ENCODE measurements at regions of chr1 and their contacts with region 1.

Region 1: DNA sequence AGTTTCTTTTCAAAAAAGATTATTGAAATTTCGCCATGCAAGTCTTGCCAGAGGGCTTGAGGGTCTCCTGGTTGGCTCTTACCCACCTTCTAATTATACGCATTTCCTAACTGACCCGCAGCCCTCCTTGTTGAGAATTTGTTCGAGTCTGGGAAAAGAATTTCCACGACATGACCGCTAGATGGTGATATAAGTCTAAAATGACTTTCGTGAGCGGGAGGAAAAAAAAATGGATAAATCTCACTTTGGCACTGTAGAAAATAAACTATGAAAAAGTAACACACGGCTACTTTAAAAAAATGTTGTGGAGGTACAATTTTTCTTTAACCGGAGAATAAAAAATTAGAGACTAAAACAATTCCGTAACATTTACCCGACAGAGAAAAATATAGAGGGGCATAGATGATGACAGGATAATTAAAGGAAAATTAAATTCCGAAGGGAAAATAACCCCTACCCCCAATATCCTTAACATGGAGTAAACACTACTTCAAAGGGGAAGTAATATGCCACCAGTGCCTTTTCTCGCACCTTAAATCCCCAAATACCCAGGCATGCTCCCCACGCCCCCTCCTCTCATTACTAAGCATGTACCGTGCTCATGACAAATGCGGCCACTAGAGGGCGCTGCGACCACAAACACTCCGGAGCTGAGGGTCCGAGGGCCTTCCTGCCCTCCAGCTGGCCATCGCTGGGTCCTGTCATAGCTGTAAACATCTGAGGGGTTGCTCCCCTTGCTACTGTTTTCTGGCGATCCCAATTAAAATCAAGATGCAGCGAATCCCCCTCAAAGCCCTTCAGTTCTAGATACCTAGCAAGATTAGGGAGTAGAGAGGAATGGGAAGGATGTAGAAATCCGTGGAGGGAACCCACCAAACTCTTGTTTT is 266.9 kb downstream of the ASTN1 start:
- DNase-seq: peak; percentile 67
- H3K4me3 ChIP-seq: no peak overlapping the region
- H3K27ac ChIP-seq: no peak overlapping the region
- H3K4me1 ChIP-seq: no peaks in the 10 kb centered on the region
- CTCF ChIP-seq: peak; percentile 86

Region 2: GRCh38 chr1:176923283-176923682 is 25.7 kb after region 1 on chr1:
- CTCF ChIA-PET with region 1: no interaction called
- POLR2A ChIA-PET with region 1: no interaction called
- intact Hi-C with region 1: no loop called
- DNase-seq: no peak
- H3K4me3 ChIP-seq: no peak overlapping the region
- H3K27ac ChIP-seq: no peak overlapping the region
- H3K4me1 ChIP-seq: no peaks in the 10 kb centered on the region
- CTCF ChIP-seq: no peak

Region 3: DNA sequence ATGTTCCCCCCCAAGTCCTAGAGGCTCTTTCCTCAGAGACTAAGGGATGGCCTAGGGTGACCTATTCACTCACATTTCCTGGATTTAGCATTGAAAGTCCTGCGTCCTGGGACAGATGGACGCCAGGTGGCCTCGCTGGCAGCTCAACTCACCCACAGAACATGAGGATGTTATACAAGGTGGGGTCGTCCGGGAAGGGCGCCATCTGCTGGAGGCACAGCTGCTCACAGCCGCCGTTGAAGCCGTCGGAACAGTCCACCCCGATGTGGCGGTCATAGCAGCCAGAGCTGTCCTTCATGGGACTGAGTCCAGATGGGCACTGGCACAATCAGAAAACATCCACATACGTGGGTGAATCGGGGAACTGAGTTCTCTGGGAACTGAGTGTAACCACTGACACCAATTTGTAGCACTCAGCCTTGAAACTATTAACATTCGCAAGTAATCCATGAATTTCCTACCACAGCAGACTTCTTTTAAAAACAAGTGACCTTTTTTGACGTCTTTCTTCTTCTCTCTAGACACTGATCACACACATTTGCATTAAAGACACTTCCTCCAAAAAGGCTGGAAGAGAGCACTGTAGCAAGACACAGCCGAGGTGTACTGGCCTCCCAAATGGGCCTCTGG is 51.6 kb after region 1 on chr1:
- CTCF ChIA-PET with region 1: no interaction called
- POLR2A ChIA-PET with region 1: no interaction called
- intact Hi-C with region 1: loop called (anchors 2 kb)
- DNase-seq: peak; percentile 26
- H3K4me3 ChIP-seq: no peak overlapping the region
- H3K27ac ChIP-seq: no peak overlapping the region
- H3K4me1 ChIP-seq: no peaks in the 10 kb centered on the region
- CTCF ChIP-seq: peak; percentile 80

Region 4: GRCh38 chr1:177355595-177355994 is 458.0 kb after region 1 on chr1:
- CTCF ChIA-PET with region 1: no interaction called
- POLR2A ChIA-PET with region 1: no interaction called
- intact Hi-C with region 1: loop called (anchors 5 kb)
- DNase-seq: peak; percentile 11
- H3K4me3 ChIP-seq: no peak overlapping the region
- H3K27ac ChIP-seq: no peak overlapping the region
- H3K4me1 ChIP-seq: no peaks in the 10 kb centered on the region
- CTCF ChIP-seq: peak; percentile 71

Region 5: GRCh38 chr1:177948336-177948972 is 1050.9 kb after region 1 on chr1:
- CTCF ChIA-PET with region 1: no interaction called
- POLR2A ChIA-PET with region 1: no interaction called
- intact Hi-C with region 1: loop called (anchors 5 kb)
- DNase-seq: peak; percentile 52
- H3K4me3 ChIP-seq: no peak overlapping the region
- H3K27ac ChIP-seq: no peak overlapping the region
- H3K4me1 ChIP-seq: no peaks in the 10 kb centered on the region
- CTCF ChIP-seq: peak; percentile 88

Measured in OCI-LY7 (cell line).